IMR-90 (cell line): ENCODE measurements at regions of chr9 and their contacts with region 1.

Region 1: GRCh38 chr9:132411091-132411508 is 1.1 kb downstream of the CFAP77 start:
- DNase-seq: peak; percentile 7
- ATAC-seq: peak; percentile 31; the same call in 1 of the 2 replicates
- H3K4me3 ChIP-seq: no peak overlapping the region
- H3K27ac ChIP-seq: no peak overlapping the region
- H3K4me1 ChIP-seq: no peaks in the 10 kb centered on the region
- H3K27me3 ChIP-seq: peaks cover 43% of the 10 kb centered on the region
- CTCF ChIP-seq: peak; percentile 53
- POLR2A ChIP-seq: no peak
- RAD21 ChIP-seq: peak; percentile 64

Region 2: DNA sequence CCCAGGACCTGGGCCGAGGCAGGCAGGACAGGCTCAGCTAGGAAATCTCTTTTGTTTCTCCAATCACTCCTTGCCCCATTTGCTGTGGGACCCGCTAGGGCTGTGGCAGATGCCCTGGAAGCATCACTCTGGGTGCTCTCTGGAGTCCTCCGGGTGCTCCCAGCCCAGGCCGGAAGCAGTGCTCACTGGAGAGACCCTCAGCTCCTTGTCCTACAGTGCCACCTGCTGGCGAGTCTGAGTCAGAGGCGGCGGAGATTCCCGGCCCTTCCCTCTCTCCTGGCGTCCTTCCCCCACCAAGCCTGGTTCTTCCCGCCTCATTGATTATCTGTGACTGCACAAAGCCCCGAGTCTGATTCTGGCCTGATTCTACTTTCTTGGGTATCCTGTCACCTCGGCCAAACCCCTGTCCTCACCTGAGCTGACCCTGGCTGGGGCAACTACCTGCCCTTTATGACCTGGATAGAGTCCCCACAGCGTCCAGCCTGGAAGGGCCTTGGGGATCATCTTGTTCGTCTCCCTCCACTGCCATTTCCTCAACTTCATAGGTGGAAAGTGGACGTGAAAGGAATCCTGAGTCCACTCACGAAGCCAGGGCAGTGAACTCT is 164.0 kb after region 1 on chr9:
- CTCF ChIA-PET with region 1: no interaction called
- POLR2A ChIA-PET with region 1: no interaction called
- dilution Hi-C with region 1: no loop called
- in situ Hi-C with region 1: no loop called
- intact Hi-C with region 1: loop called (anchors 1 kb)
- DNase-seq: peak; percentile 67
- ATAC-seq: peak; percentile 98
- H3K4me3 ChIP-seq: no peak overlapping the region
- H3K27ac ChIP-seq: no peak overlapping the region
- H3K4me1 ChIP-seq: no peaks in the 10 kb centered on the region
- H3K27me3 ChIP-seq: peaks cover 57% of the 10 kb centered on the region
- CTCF ChIP-seq: peak; percentile 86
- POLR2A ChIP-seq: 0 out of 2 replicates have a peak, but pooled peaks have one; percentile 28
- RAD21 ChIP-seq: peak; percentile 93

Region 3: GRCh38 chr9:132651254-132651653 is 240.2 kb after region 1 on chr9:
- CTCF ChIA-PET with region 1: no interaction called
- POLR2A ChIA-PET with region 1: no interaction called
- dilution Hi-C with region 1: no loop called
- in situ Hi-C with region 1: no loop called
- intact Hi-C with region 1: loop called (anchors 10 kb)
- DNase-seq: peak; percentile 98
- ATAC-seq: peak; percentile 63
- H3K4me3 ChIP-seq: no peak overlapping the region
- H3K27ac ChIP-seq: no peak overlapping the region
- H3K4me1 ChIP-seq: peaks cover 10% of the 10 kb centered on the region
- H3K27me3 ChIP-seq: no peaks in the 10 kb centered on the region
- CTCF ChIP-seq: peak; percentile 73
- POLR2A ChIP-seq: no peak
- RAD21 ChIP-seq: peak; percentile 64

Region 4: DNA sequence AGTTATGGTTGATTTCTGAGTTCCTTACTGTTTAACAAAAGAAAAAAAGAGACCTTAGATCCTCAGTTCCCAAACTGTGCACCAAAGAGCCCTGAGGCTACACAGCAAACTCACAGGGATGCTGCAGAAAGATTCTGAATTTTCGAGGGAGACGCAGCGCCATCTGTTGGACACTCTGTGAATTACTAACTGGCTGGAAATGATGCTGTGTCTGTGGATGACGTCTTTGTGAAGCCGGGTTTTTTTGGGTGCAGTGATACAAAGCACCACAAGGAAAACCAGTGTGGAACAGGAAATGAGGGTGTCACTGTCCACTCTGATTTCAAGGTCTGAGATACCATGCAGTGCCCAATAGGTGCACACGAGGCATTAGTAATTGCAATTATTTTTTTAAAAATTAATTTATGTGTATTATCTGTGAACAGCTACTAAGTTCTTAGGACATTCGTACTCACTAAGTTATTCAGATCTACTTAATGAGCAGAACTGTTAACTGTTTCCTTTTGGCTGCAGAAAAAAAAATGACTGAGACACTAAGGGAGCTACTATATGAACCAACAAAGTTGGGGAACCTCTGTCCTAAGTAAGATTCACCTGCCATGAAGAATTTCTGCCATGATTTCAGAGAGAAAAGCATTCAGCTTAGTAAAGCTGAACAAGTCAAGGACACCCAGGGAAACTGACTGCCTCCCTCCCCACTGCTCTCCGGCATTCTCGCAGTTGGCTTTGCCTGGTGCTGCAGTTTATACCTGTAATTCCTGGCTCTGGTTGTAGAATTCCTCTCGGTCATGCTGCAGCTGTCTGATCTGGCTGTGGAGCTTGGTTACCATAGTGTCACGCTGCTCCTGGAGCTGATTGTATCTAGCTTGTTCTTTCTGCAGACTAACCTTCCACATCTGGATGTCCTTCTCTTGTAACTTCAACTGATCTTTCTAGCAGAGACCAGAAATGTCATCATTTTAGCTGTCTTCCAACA is 491.0 kb after region 1 on chr9:
- CTCF ChIA-PET with region 1: no interaction called
- POLR2A ChIA-PET with region 1: no interaction called
- dilution Hi-C with region 1: no loop called
- in situ Hi-C with region 1: no loop called
- intact Hi-C with region 1: loop called (anchors 10 kb)
- DNase-seq: peak; percentile 83
- ATAC-seq: peak; percentile 99
- H3K4me3 ChIP-seq: no peak overlapping the region
- H3K27ac ChIP-seq: no peak overlapping the region
- H3K4me1 ChIP-seq: no peaks in the 10 kb centered on the region
- H3K27me3 ChIP-seq: no peaks in the 10 kb centered on the region
- CTCF ChIP-seq: peak; percentile 88
- POLR2A ChIP-seq: no peak
- RAD21 ChIP-seq: peak; percentile 63